PC-9 (cell line): ENCODE measurements at regions of chr3 and their contacts with region 1.

Region 1: DNA sequence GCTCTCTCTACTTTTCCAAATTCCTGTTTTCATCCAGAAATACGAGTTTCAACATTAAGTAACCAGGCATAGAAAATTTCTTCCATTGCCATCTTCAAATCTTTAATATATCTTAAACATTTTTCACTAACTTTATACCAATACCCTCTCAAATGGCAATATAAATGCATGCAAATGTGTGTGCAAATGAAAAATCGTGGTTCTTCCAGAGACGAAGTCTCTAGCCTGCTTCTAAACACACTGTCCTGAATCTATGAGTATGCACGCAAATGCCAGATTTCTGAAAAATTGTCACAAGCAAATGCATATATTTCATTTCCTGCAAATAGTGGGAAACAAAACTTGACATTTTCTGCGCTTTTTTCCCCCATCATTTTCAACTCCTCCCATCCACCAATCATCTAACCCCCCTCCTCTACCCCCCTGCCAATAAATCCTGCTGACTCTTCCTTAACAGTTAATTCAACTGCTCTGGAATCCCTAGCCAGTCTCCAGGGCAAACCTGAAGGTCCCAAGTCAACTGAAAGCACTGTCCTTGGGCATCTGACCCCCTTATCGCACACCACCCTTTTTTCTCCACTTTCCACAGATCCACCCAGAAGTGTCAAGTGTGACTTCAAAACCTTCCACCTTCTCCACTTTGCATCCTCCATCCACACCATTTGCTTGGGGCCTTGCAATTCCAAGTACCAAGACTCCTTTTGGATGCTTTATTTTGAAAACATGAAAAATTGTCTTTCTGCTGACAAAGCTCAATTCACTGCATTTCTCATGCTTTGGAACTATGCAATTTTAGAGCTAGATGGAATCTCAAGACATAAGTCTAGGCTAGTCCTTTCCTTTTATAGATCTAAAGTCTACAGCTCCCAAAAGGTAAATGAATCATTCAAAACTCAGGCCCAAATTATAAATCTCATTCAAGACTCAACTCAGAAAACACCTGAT is 144.7 kb downstream of the OSBPL10 start:
- DNase-seq: no peak
- H3K4me3 ChIP-seq: no peak overlapping the region
- H3K27ac ChIP-seq: no peak overlapping the region
- H3K4me1 ChIP-seq: no peaks in the 10 kb centered on the region
- H3K27me3 ChIP-seq: no peaks in the 10 kb centered on the region
- CTCF ChIP-seq: no peak

Region 2: DNA sequence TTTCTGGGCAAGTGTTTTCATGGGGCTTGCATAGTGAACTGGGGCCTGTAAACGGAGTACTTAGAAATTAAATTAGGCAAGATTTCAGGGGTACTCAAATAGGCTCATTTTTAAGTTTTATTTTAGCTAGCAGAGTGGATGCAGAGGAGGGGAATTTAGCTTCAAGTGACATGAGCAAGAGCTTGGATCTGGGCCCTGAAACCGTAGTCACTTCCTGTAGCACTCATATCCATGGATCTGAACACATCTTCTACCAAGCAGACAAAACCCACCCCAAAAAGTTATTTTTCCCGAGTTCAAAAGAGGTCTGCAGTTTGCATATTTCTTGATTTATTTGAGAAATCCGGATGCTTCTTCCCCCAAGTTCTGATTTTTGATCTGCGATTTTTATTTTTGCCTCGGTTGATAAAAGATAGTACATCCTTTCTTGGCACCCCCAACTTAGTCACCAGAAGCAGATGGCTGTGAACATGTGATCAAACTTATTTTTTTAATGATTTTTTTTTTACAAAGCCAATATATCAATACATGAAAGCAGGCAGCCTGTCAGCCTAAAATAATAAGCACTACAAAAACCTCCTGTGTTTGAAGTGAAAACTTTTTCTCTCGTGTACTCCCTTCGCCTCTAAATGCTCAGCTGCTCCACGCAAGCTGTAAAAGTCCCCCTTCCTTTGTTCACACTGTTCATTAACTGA is 340.3 kb before region 1 on chr3:
- CTCF ChIA-PET with region 1: no interaction called
- POLR2A ChIA-PET with region 1: no interaction called
- intact Hi-C with region 1: no loop called
- DNase-seq: no peak
- H3K4me3 ChIP-seq: no peak overlapping the region
- H3K27ac ChIP-seq: no peak overlapping the region
- H3K4me1 ChIP-seq: no peaks in the 10 kb centered on the region
- H3K27me3 ChIP-seq: no peaks in the 10 kb centered on the region
- CTCF ChIP-seq: no peak

Region 3: DNA sequence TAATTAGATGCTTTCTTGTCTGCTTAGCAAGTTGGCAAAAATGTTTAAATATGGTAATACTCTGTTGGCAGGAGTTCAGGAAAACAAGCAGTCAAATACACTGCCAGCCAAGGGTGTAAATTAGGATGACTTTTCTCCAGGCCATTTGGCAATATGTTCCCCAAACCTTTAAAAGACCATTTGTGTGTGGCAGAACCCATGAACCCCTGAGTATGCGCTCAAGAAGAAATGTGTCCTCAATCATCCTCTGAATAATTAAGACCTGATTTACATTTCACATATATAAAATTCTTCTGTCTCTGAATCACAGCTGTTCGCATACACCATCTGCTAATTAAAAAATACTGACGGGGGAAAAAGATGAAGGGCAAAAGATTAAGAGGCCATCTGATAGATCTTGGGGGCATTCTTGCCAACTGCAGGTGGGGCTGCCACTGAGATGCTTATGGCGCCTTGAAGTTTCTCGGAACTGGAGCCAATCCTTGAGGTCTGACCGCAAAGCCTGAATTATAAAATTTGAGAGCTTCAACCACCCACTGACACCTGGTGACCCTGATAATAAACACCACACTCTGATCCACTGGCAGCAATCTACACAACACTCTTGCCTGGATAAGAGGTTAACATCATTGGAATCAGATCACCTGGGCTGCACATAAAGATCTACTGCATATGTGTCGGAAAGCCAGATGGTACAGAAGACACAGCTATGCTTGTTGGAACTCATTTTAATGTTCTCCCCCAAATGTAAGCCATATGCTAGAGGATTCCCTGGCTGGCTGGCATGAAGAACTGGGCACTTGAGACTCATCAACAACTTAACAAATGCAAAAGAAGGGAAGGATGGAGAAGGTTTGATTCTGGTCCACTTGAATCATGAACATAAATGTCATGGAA is 46.0 kb before region 1 on chr3:
- CTCF ChIA-PET with region 1: no interaction called
- POLR2A ChIA-PET with region 1: no interaction called
- intact Hi-C with region 1: no loop called
- DNase-seq: no peak
- H3K4me3 ChIP-seq: no peak overlapping the region
- H3K27ac ChIP-seq: no peak overlapping the region
- H3K4me1 ChIP-seq: no peaks in the 10 kb centered on the region
- H3K27me3 ChIP-seq: no peaks in the 10 kb centered on the region
- CTCF ChIP-seq: no peak

Region 4: DNA sequence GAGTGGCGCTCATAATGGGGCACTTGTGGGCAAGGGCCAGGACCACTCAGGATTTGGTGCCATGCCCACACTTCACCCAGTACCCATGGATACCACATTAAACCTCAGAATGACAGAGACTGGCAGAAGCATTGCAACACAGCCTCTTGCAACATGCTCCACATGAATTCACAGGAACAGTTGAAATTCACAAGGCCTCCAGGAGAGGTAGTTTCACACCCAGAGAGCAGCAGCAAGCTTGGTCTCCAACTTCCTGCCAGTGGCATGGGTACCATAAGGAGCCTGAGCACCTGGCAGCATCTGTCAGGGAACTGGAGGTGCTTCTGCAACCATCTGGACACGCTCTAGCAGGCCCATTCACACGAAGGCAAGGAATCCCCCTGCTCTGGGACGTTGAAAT is 43.6 kb after region 1 on chr3:
- CTCF ChIA-PET with region 1: no interaction called
- POLR2A ChIA-PET with region 1: interaction called, 10 read pairs
- intact Hi-C with region 1: no loop called
- DNase-seq: no peak
- H3K4me3 ChIP-seq: no peak overlapping the region
- H3K27ac ChIP-seq: no peak overlapping the region
- H3K4me1 ChIP-seq: no peaks in the 10 kb centered on the region
- H3K27me3 ChIP-seq: no peaks in the 10 kb centered on the region
- CTCF ChIP-seq: no peak